Activated CD4-positive, alpha-beta memory T cell treated with anti-CD3 and anti-CD28 coated beads for 36 hours (primary cell): ENCODE measurements at regions of chr2 and their contacts with region 1.

Region 1: GRCh38 chr2:171882089-171882769 is 11.8 kb downstream of the SLC25A12 start:
- DNase-seq: no peak
- H3K4me3 Mint-ChIP-seq: no peak overlapping the region
- H3K27ac Mint-ChIP-seq: peak overlapping the region; percentile 76
- H3K4me1 Mint-ChIP-seq: peaks cover 36% of the 10 kb centered on the region
- H3K27me3 Mint-ChIP-seq: no peaks in the 10 kb centered on the region

Region 2: DNA sequence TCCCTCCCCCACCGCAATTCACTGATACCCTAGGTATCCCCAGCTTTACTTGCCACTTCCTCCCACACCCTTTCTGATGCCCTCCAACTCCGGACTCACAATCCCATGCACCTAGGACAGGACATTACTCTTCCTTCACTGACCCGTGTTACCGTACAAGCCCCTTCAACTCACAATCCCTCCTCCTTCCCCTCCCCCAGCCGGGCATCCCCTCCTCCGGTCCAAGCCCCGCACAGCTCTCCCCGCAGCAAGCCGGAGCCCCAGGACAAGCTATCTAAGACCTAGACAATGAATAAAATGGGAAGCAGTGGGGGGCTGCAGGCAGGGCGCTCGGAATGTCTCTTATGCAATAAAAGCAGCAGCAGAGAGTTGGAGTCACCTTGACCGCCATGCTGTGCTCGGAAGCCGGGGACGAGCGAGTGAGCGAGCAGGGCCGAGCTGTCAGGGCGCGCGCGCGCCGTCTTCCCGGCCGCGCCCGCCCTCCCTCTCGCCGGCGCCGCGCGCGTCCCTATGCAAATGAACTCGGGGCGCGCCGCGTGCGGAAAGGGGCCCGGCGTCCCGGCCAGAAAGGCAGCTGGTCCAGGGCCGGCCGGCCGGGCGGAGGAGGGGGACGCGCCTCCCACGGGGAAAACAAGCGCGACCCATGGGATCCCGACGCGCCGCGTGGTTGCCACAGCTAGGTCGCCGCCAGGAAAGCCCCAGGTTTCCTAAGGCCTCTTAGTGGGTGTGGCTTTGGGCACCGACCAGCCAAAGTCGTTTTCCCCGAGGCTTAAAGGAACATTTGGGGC is 11.8 kb after region 1 on chr2 and contains the start of gene SLC25A12:
- CTCF ChIA-PET with region 1: interaction called, 3 read pairs
- POLR2A ChIA-PET with region 1: interaction called, 18 read pairs
- intact Hi-C with region 1: no loop called
- DNase-seq: peak; percentile 83
- H3K4me3 Mint-ChIP-seq: peak within 1 kb of the TSS; percentile 96
- H3K27ac Mint-ChIP-seq: peak within 1 kb of the TSS; percentile 91
- H3K4me1 Mint-ChIP-seq: peaks cover 26% of the 10 kb centered on the region
- H3K27me3 Mint-ChIP-seq: peaks cover 3% of the 10 kb centered on the region
- total RNA-seq, gene SLC25A12: 15.1 to 17.0 TPM